Calu3 (cell line): ENCODE measurements at regions of chr1 and their contacts with region 1.

Region 1: DNA sequence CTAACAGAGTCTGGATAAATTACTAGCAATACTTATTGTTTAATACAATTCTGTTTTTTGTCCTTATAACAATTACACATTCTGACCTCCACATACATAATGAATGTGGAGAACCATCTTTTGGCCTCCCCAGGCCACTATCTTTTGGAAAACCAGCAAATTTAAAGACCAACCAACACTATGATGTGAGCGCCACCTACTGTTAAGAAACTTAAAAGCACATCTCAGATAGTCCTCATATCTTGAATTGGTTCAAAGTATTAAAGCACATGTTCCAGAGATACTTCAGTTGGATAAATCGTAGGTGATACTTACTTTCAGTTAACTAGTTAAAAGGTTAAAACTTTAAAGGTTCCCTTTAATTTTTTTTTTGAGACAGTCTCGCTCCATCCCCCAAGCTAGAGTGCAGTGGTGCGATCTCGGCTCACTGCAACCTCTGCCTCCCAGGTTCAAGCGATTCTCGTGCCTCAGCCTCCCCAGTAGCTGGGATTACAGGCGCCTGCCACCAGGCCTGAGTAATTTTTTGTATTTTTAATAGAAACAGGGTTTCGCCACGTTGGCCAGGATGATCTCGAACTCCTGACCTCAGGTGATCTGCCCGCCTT is 29.3 kb upstream of the USP1 start:
- DNase-seq: peak; percentile 35
- H3K4me3 Mint-ChIP-seq: no peak overlapping the region
- H3K27ac Mint-ChIP-seq: no peak overlapping the region
- H3K4me1 Mint-ChIP-seq: no peaks in the 10 kb centered on the region
- H3K27me3 Mint-ChIP-seq: peaks cover 32% of the 10 kb centered on the region
- CTCF ChIP-seq: peak; percentile 51

Region 2: DNA sequence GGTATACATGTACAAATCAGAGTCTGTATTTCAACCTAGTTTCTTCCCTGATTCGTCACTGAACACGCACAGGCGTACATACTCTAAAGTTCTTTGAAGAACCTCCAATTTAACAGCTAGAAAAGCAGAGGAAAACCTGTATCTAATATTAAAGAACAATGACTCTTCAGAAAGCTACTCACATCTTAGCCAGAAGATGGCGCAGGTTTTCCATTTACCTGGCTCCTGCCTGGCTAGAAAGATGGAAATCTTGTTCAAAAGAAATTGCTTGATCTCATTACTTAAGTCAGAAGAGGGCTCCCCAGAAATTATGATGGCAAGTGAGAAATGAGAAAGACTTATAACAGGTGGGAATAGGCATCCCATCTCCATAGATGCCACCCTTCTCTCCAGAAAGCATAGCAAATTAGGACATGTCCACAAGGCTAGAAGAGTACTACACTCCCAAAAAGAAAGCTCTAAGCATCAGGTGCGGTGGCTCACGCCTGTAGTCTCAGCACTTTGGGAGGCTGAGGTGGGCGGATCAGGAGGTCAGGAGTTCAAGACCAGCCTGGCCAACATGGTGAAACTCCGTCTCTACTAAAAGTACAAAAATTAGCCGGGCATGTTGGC is 231.8 kb before region 1 on chr1:
- CTCF ChIA-PET with region 1: interaction called, 21 read pairs
- intact Hi-C with region 1: loop called (anchors 1 kb)
- DNase-seq: peak; percentile 40
- H3K4me3 Mint-ChIP-seq: no peak overlapping the region
- H3K27ac Mint-ChIP-seq: no peak overlapping the region
- H3K4me1 Mint-ChIP-seq: peaks cover 7% of the 10 kb centered on the region
- H3K27me3 Mint-ChIP-seq: no peaks in the 10 kb centered on the region
- CTCF ChIP-seq: peak; percentile 59

Region 3: DNA sequence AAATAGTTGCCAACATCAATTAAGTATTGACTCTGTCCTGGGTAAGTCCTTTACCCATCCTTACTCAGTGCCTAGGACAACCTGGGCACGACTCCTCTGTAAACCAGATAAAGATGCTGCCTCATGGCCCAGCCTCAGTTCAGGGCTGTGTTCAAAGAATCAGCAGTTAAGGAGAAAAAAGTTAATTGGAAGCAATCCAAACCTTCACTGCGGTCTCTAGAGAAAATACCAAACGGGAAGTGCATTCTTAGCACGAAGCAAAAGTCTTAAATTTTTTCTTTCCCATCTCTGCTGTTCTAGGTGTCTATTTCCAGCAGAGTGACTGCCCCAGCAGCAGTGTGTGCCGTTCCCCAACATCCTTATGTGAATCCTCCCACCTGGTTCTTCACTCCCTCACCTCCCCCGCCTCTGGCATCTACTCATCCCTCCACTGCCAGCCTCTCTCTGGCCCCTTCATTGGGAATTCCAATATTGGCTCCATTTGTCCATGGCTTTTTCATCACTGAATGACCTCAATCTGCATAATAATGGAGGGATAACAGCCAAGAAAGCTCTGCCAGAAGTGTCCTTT is 111.5 kb before region 1 on chr1:
- CTCF ChIA-PET with region 1: no interaction called
- intact Hi-C with region 1: loop called (anchors 5 kb)
- DNase-seq: no peak
- H3K4me3 Mint-ChIP-seq: no peak overlapping the region
- H3K27ac Mint-ChIP-seq: no peak overlapping the region
- H3K4me1 Mint-ChIP-seq: no peaks in the 10 kb centered on the region
- H3K27me3 Mint-ChIP-seq: peaks cover 55% of the 10 kb centered on the region
- CTCF ChIP-seq: no peak

Region 4: GRCh38 chr1:62457955-62458354 is 50.4 kb after region 1 on chr1:
- CTCF ChIA-PET with region 1: no interaction called
- intact Hi-C with region 1: no loop called
- DNase-seq: no peak
- H3K4me3 Mint-ChIP-seq: no peak overlapping the region
- H3K27ac Mint-ChIP-seq: no peak overlapping the region
- H3K4me1 Mint-ChIP-seq: no peaks in the 10 kb centered on the region
- H3K27me3 Mint-ChIP-seq: no peaks in the 10 kb centered on the region
- CTCF ChIP-seq: no peak